Body of pancreas (tissue), 4 donors: ENCODE measurements at regions of chr13 and their contacts with region 1.

Region 1: GRCh38 chr13:26946684-26947343 is 186.2 kb upstream of the GPR12 start:
- DNase-seq: peak in 1 of 4 donors; percentile 62
- ATAC-seq: peak; percentile 45
- H3K4me3 ChIP-seq: no peak overlapping the region
- H3K27ac ChIP-seq: no peak overlapping the region
- H3K4me1 ChIP-seq: peaks cover 25% of the 10 kb centered on the region
- H3K27me3 ChIP-seq: no peaks in the 10 kb centered on the region
- CTCF ChIP-seq: peak; percentile 60 to 98 (median 96)
- POLR2A ChIP-seq: no peak

Region 2: GRCh38 chr13:27270594-27271520 is 324.0 kb after region 1 on chr13 and contains the start of gene RASL11A:
- intact Hi-C with region 1: loop called (anchors 10 kb)
- DNase-seq: peak; percentile 83 to 90 (median 90)
- ATAC-seq: peak; percentile 94
- H3K4me3 ChIP-seq: peak within 1 kb of the TSS; percentile 9 to 78
- H3K27ac ChIP-seq: peak within 1 kb of the TSS; percentile 79 to 94 (median 84)
- H3K4me1 ChIP-seq: peaks cover 24% of the 10 kb centered on the region
- H3K27me3 ChIP-seq: no peaks in the 10 kb centered on the region
- CTCF ChIP-seq: peak; percentile 78 to 97 (median 85)
- POLR2A ChIP-seq: peak; percentile 89 to 96 (median 94)
- total RNA-seq, gene RASL11A: 1.3 to 6.5 TPM

Region 3: DNA sequence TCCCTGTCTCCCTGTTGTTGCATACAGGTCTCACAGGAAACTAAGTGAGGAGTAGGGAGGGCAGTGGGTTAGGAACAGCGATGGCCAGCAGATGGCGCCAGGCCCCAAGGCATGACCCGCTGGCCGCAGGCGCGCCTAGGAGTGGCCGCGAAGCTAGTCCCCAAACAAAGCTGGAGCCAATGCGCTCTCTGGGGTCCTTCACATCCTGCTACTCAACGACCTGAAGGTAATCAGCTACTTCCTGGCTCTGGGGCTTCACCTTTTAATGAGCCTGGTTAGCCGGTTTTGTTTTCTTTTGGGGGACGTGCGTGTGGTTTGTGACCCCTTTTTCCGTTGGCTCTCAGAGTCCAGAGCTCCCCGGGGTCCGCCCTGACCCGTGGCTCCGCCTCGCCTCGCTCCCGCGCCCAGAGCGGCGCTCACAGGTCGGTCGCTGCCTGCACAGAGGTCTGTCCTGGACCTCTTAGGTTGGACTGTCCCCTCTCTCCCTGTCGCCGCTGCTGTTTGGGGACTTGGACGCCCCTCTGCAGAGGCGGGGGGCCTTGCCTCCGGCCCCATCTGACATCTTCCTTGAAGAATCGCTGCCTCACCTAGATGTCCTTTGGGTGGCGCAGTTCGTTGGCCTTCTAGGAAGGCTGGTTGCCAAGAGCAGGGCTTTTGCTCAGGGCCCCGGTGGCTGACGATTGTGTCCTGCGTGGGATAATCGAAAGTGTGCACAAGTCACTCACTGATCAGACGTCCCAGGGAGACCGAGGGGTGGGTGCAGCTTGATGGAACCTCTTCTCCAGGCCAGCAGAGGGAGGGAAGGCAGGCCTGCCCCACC is 415.5 kb after region 1 on chr13:
- intact Hi-C with region 1: loop called (anchors 5 kb)
- DNase-seq: peak; percentile 91 to 94 (median 92)
- ATAC-seq: peak; percentile 96
- H3K4me3 ChIP-seq: peak overlapping the region; percentile 4 to 7
- H3K27ac ChIP-seq: peak overlapping the region; percentile 43 to 64 (median 54)
- H3K4me1 ChIP-seq: peaks cover 15% of the 10 kb centered on the region
- H3K27me3 ChIP-seq: no peaks in the 10 kb centered on the region
- CTCF ChIP-seq: peak; percentile 79 to 98 (median 96)
- POLR2A ChIP-seq: peak in 2 of 3 donors; percentile 54 to 62